ENCODE measurements at regions of chr1 and their contacts with region 1.

Region 1: GRCh38 chr1:33472349-33472980 is at the start of gene ZSCAN20:
- DNase-seq: peak; percentile 91 to 97 (median 93)
- ATAC-seq: peak; percentile 98
- H3K4me3 ChIP-seq: peak within 1 kb of the TSS; percentile 60
- H3K27ac ChIP-seq: peak within 1 kb of the TSS; percentile 27; the same call in 2 of the 3 replicates
- H3K4me1 ChIP-seq: peaks cover 3 to 5% of the 10 kb centered on the region in 2 experiments; a peak in 3 of 5 replicates
- H3K27me3 ChIP-seq: peaks cover 0 to 8% of the 10 kb centered on the region in 2 experiments; a peak in 1 of 5 replicates
- CTCF ChIP-seq: no peak
- EP300 ChIP-seq: peak; percentile 44; the same call in 1 of the 2 replicates
- POLR2A ChIP-seq: peak; percentile 76
- RAD21 ChIP-seq: no peak
- polyA plus RNA-seq, gene ZSCAN20: 0.36 to 0.58 TPM

Region 2: GRCh38 chr1:33137800-33138199 is 334.7 kb before region 1 on chr1:
- CTCF ChIA-PET with region 1: no interaction called
- POLR2A ChIA-PET with region 1: no interaction called
- in situ Hi-C with region 1: no loop called
- intact Hi-C with region 1: loop called (anchors 10 kb)
- DNase-seq: peak; percentile 47 to 58 (median 54)
- ATAC-seq: peak; percentile 73
- H3K4me3 ChIP-seq: no peak overlapping the region
- H3K27ac ChIP-seq: no peak overlapping the region
- H3K4me1 ChIP-seq: peaks cover 0 to 6% of the 10 kb centered on the region in 2 experiments; a peak in 3 of 5 replicates
- H3K27me3 ChIP-seq: peaks cover 6 to 33% of the 10 kb centered on the region in 2 experiments; a peak in 4 of 5 replicates
- CTCF ChIP-seq: peak; percentile 59 to 72 (median 61)
- EP300 ChIP-seq: no peak
- POLR2A ChIP-seq: no peak
- RAD21 ChIP-seq: peak in 1 of 2 experiments; percentile 54; a peak in 2 of 4 replicates

Region 3: DNA sequence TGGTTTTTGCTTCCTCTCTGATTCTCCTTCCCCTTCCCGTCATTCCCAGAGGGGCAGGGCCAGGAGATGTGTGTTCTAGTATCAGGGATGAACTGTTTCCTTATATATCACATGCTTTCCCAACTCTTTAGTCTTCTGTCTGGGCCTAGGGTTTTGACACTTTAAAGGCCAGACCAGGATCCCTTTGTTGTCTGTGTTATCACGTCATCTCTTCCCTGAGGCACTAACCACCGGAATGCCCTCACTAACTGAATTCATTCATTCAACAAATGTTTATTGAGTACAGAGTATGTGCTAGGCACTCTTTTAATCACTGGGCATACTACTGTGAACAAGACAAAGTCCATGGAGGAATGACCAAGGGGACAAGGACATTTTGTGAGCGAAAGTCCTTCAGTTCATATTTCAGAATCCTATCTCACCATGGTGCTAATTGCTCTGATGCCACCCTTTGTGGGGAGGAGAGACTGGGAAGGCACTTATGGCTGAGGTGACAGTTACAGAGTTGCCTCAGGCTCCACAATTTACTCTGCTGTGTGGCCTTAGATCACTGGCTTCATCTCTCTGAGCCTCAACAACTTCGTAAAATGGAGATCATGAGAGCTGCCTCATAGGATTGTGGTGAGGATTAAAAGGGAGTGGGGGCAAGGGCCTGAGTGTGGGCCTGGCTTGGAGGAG is 228.2 kb before region 1 on chr1:
- CTCF ChIA-PET with region 1: no interaction called
- POLR2A ChIA-PET with region 1: no interaction called
- in situ Hi-C with region 1: no loop called
- intact Hi-C with region 1: no loop called
- DNase-seq: no peak
- ATAC-seq: no peak
- H3K4me3 ChIP-seq: no peak overlapping the region
- H3K27ac ChIP-seq: no peak overlapping the region
- H3K4me1 ChIP-seq: no peaks in the 10 kb centered on the region
- H3K27me3 ChIP-seq: peaks cover 17 to 44% of the 10 kb centered on the region in 2 experiments
- CTCF ChIP-seq: no peak
- EP300 ChIP-seq: no peak
- POLR2A ChIP-seq: no peak
- RAD21 ChIP-seq: no peak

Region 4: GRCh38 chr1:33610864-33611455 is 138.5 kb after region 1 on chr1:
- CTCF ChIA-PET with region 1: no interaction called
- POLR2A ChIA-PET with region 1: no interaction called
- in situ Hi-C with region 1: no loop called
- intact Hi-C with region 1: loop called (anchors 5 kb)
- DNase-seq: no peak
- ATAC-seq: no peak
- H3K4me3 ChIP-seq: no peak overlapping the region
- H3K27ac ChIP-seq: no peak overlapping the region
- H3K4me1 ChIP-seq: no peaks in the 10 kb centered on the region
- H3K27me3 ChIP-seq: peaks cover 8 to 37% of the 10 kb centered on the region in 2 experiments; a peak in 4 of 5 replicates
- CTCF ChIP-seq: no peak
- EP300 ChIP-seq: no peak
- POLR2A ChIP-seq: no peak
- RAD21 ChIP-seq: no peak

Region 5: DNA sequence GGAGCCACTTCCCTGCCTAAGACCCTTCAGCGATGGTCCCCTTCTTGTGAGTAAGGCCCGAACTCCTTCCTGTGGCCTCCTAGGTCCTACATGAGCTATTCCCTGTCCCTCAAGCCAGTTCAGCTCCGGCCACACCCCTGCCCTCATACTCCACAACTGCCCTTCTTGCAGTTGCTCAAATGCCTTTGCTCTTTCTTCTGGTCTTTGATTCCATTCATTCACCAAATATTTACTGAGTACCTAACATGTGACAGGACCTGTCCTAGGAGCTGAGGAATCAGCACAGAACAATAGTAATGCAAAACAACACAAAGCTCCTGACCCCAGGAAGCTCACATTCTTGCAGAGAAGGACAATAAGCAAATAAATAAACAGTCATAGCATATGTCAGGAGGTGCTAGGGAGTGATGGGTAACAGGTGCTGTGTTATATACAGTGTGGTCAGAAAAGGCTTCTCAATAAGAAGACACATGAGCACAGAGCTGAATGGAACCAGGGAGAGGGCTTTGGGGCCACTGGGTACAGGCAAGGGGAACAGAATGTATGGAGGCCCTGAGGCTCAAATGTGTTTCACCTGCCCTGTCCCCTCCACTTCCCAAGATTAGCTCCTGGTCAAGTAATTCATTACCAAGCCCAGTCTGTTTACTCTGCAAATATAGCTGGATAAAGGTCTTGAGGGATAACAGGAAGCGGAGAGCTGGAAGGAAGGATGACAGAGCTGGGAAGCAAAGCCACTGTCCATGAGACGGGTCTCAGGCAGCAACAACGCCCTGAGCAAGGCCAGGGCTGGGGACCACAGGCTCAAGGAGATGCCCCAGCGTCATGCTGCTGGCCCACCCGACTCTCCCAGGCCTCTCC is 547.5 kb after region 1 on chr1:
- CTCF ChIA-PET with region 1: no interaction called
- POLR2A ChIA-PET with region 1: no interaction called
- in situ Hi-C with region 1: no loop called
- intact Hi-C with region 1: no loop called
- DNase-seq: no peak
- ATAC-seq: no peak
- H3K4me3 ChIP-seq: no peak overlapping the region
- H3K27ac ChIP-seq: no peak overlapping the region
- H3K4me1 ChIP-seq: no peaks in the 10 kb centered on the region
- H3K27me3 ChIP-seq: no peaks in the 10 kb centered on the region; a peak in 2 of 5 replicates
- CTCF ChIP-seq: no peak
- EP300 ChIP-seq: no peak
- POLR2A ChIP-seq: no peak
- RAD21 ChIP-seq: no peak